ENCODE measurements at regions of chr3 and their contacts with region 1.

Region 1: GRCh38 chr3:128466840-128467541 is at the start of gene DNAJB8:
- DNase-seq: no peak
- H3K4me3 ChIP-seq: no peak within 1 kb of the TSS
- H3K27ac ChIP-seq: no peak within 1 kb of the TSS
- H3K4me1 ChIP-seq: no peaks in the 10 kb centered on the region
- H3K27me3 ChIP-seq: peaks cover 0 to 6% of the 10 kb centered on the region in 2 donors
- CTCF ChIP-seq: no peak
- POLR2A ChIP-seq: no peak
- total RNA-seq, gene DNAJB8: not detected

Region 2: DNA sequence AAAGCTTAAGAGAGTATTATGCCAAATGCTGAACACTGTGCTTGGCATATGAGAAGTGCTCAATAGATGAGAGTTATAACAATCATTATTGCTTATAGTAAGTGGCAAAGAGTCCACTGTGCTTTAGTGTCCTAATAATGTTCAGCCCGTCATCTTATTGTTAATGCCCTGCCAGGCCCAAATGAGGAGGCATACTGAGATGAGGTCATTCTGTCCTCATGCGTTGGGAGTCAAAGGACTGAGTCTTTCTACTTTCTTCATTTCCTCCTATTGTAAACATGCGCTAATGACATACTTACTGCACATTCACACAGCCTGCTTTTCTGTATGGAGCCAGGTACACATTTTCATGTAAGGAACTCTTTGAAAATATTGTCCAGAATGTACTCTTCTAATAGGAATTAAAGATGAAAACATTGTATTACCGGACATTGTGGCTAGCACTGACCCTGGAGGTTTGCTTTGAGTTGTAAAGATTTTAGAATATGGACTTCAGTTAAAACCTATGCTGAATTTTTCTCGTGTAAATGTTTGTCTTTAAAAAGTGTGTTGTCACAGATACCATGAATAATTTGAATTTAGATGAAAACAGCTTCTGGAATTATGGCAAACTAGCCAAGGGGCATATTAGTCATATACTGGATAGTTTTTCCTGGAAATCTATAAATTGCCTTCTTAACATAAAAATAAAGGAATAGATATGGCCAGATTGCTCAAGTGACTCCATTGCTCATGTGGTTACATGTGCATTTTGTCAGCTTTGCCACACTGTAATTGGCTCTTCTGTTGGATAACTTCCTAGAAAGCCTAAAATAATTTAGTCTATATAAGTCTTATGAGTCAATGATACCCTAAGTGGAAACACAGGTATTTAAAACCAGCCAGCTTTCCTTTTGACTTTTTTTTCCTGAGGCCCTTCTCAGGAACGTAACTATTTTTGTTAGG is 513.6 kb before region 1 on chr3:
- intact Hi-C with region 1: loop called (anchors 5 kb)
- DNase-seq: no peak
- H3K4me3 ChIP-seq: no peak overlapping the region
- H3K27ac ChIP-seq: no peak overlapping the region
- H3K4me1 ChIP-seq: no peaks in the 10 kb centered on the region
- H3K27me3 ChIP-seq: no peaks in the 10 kb centered on the region
- CTCF ChIP-seq: no peak
- POLR2A ChIP-seq: no peak

Region 3: DNA sequence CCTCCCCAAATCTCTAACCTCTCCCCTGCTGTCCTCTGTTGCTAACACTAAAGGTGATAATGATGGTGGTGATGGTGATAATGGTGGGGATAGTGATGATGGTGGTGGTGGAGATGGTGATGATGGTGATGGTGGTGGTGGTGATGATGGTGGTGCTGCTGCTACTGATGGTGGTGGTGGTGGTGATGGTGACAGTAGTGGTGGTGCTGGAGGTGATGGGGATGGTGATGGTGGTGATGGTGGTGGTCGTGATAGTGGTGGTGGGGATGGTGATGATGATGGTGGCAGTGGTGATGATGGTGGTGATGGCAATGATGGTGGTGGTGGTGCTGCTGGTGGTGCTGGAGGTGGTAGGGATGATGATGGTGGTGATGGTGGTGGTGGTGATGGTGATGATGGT is 21.7 kb before region 1 on chr3:
- intact Hi-C with region 1: loop called (anchors 1 kb)
- DNase-seq: no peak
- H3K4me3 ChIP-seq: no peak overlapping the region
- H3K27ac ChIP-seq: no peak overlapping the region
- H3K4me1 ChIP-seq: no peaks in the 10 kb centered on the region
- H3K27me3 ChIP-seq: no peaks in the 10 kb centered on the region
- CTCF ChIP-seq: no peak
- POLR2A ChIP-seq: no peak

Region 4: DNA sequence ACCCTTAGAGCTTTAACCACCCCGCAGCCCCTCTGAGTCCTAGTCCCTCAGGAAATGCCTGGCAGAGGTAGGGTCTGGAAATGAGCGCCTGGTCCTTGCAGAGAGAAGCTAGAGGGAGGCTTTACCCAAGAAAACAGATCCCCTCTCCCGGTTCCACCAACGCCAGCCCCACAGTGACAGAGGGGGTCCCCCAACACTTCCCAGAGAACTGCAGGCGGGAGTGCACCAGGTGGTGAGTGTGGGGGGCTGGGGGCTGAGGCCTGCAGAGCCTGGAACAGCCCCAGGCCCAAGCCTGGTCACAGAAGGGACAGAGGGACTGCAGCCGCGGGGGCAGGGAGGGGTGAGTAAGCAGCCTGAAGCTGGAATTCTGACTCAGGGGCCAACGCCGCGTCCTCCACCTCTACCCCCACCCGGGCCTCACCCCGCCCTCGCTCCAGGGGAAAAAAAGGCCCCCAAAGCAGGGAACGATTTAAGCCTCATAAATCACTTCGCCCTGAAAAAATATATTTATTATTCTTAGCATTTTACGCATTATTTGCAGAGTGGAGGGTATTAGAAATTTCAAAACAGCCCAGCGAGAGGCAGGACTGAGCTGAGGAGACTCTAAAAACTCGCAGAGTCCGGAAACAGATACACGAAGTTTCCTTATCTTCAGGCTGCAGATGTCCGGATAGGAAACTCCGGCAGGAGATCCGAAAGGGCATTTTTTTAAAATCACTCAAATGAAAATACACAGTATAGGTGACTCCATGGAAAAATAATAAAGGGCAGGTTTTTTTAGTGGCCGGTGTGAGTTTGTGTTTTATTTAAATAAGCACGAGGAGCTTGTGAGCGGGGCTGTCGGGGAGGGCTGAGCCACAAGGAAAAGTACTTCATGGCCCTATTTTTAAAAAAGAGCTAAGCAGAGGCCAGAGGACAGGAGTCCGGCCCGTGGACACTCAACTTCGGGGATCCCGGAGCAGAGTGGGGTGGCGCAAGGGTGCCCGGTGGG is 16.0 kb after region 1 on chr3:
- intact Hi-C with region 1: no loop called
- DNase-seq: no peak
- H3K4me3 ChIP-seq: peak overlapping the region in 2 of 3 donors; percentile 7 to 34
- H3K27ac ChIP-seq: peak overlapping the region in 1 of 2 donors; percentile 33
- H3K4me1 ChIP-seq: peaks cover 3 to 4% of the 10 kb centered on the region in 2 donors
- H3K27me3 ChIP-seq: peaks cover 10 to 87% of the 10 kb centered on the region in 2 donors
- CTCF ChIP-seq: no peak
- POLR2A ChIP-seq: no peak

Region 5: DNA sequence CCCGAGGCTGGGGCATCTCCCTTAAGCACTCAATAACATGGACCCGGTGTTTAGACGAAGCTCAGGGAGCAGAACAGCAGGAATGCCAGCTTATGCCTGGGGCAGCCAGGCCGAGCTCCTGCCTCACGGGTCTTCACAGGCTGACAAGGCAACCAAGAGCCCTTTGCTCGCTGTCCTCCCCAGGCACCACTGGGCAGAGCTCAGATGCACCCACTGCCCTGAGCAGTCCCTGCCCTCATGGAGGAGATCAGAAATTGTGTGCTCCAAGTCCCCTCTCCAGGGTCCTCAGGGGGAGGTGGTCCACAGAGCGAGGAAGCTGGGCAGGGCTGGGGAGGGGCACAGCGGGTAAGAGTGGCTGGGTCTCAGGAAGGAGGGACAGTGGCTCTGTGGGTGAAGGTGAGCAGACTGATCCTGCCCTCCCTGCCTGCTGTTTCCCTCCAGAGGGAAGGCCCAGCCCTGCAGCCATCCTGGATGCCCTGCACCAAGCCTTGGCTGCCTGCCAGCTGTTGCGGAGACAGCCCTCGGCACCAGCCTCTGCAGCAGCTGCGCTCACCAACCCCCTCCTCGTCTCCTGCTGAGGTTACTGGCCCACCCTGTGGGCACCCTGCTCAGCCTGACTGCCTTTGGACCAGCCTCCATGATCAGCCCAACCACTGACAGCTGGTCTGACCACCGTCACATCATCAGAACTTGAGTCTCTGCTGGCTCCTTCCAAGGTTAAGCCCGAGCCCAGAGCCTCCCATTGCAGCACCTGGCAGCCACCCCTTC is 572.5 kb after region 1 on chr3:
- intact Hi-C with region 1: no loop called
- DNase-seq: no peak
- H3K4me3 ChIP-seq: no peak overlapping the region
- H3K27ac ChIP-seq: no peak overlapping the region
- H3K4me1 ChIP-seq: no peaks in the 10 kb centered on the region
- H3K27me3 ChIP-seq: no peaks in the 10 kb centered on the region
- CTCF ChIP-seq: no peak
- POLR2A ChIP-seq: no peak